OCI-LY7 (cell line): ENCODE measurements at regions of chr10 and their contacts with region 1.

Region 1: DNA sequence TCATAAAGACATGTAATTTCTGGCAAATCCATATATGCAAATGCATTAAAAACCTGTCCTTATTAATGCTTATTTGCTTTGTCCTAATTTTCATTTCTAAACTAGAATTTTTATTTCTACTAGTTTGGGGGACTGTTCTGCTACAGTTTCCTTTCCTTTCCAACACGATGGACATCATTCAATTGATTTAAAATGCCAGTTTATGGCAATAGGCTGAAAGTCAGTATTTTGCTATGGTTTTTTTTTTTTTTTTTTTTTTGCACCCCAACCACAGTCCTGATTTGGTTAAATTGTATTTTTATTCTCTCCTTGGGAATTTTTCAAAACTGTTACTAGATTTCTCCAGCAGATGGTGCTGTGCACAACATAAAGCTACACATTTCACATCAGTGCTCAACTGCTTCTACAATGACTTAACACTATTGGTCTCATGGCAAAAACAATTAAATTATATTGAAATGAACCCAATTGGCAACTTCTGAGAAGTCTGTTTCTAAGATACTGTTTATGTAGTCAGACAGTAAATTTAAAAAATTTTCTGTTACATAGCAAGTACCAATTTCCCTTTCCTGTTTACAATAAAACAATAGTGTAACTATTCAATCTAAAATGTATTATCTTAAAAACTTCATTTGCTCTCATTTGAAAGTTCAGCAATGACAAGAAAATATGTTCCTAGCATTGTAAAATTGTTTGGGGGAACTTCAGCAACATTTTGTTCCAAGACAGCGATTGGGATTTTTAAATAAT is 193.8 kb upstream of the CCDC6 start:
- DNase-seq: peak; percentile 58
- H3K4me3 ChIP-seq: no peak overlapping the region
- H3K27ac ChIP-seq: no peak overlapping the region
- H3K4me1 ChIP-seq: no peaks in the 10 kb centered on the region
- CTCF ChIP-seq: peak; percentile 85

Region 2: GRCh38 chr10:59865101-59865500 is 235.1 kb before region 1 on chr10:
- CTCF ChIA-PET with region 1: no interaction called
- POLR2A ChIA-PET with region 1: no interaction called
- intact Hi-C with region 1: loop called (anchors 10 kb)
- DNase-seq: peak; percentile 35
- H3K4me3 ChIP-seq: no peak overlapping the region
- H3K27ac ChIP-seq: no peak overlapping the region
- H3K4me1 ChIP-seq: peaks cover 5% of the 10 kb centered on the region
- CTCF ChIP-seq: peak; percentile 75

Region 3: DNA sequence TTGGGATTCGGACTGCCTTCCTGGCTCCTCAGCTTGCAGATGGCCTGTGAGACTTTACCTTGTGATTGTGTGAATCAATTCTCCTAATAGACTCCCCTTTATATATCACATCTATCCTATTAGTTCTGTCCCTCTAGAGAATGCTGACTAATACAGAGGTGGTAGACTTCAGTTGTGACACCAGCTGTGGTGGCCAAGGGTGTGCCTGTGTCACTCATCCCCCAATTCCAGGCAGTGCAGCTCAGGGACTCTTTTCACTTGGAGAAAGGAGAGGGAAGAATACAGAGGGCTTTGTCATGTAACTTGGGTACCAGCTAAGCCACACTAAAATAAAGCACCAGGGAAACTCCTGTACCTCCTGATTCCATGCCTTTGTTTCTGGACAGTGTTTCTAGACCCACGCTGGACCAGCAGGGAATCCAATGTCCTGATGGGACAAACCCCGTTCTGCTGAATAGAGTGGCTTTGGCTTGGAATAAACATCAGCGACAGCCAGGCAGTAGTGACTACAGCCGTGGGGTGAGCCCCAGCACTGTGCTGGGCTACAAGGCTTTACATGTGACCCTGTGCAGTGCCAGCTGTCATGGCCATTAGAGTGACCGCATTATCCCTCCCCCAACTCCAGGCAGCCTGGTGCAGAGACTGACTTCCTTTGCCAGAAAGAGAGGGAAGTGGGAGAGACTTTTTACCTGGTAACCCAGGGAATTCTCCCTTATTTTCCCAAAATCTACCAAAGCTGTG is 55.9 kb after region 1 on chr10:
- CTCF ChIA-PET with region 1: no interaction called
- POLR2A ChIA-PET with region 1: no interaction called
- intact Hi-C with region 1: no loop called
- DNase-seq: no peak
- H3K4me3 ChIP-seq: no peak overlapping the region
- H3K27ac ChIP-seq: no peak overlapping the region
- H3K4me1 ChIP-seq: no peaks in the 10 kb centered on the region
- CTCF ChIP-seq: no peak

Region 4: DNA sequence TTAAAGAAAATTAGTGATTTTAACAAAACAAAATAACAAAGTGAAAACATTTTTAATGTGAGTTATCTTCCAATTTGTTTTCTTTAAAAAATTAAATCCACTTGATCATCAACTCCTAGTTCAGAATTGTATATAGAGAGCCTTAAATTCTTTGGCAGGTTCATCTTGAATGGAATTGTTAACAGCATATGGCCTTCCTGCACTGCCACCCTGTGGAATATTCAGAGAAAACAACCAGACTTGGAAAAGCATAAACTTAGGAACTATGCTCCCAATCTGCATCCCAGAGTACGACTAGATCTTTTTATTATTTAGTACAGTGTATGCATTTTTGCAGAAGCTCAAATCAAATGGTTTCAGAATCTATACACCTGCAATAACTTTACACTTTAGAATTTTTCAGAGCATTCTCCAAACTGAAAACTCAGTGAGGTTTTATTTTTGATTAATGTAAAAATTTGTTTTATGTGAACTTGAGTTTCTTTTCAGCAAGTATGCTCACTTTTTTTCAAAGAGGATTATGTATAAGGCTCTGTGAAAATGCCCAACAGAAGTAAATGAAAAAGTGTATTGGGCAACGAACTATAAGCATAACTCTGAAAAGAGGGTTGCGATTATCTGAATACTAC is 334.4 kb after region 1 on chr10:
- CTCF ChIA-PET with region 1: no interaction called
- POLR2A ChIA-PET with region 1: interaction called, 3 read pairs
- intact Hi-C with region 1: loop called (anchors 1 kb)
- DNase-seq: peak; percentile 49
- H3K4me3 ChIP-seq: no peak overlapping the region
- H3K27ac ChIP-seq: no peak overlapping the region
- H3K4me1 ChIP-seq: no peaks in the 10 kb centered on the region
- CTCF ChIP-seq: peak; percentile 90

Region 5: GRCh38 chr10:60646966-60647796 is 547.0 kb after region 1 on chr10:
- CTCF ChIA-PET with region 1: no interaction called
- POLR2A ChIA-PET with region 1: no interaction called
- intact Hi-C with region 1: loop called (anchors 2 kb)
- DNase-seq: peak; percentile 63
- H3K4me3 ChIP-seq: no peak overlapping the region
- H3K27ac ChIP-seq: no peak overlapping the region
- H3K4me1 ChIP-seq: peaks cover under 1% of the 10 kb centered on the region
- CTCF ChIP-seq: peak; percentile 93

Region 6: GRCh38 chr10:60778214-60779029 is 678.2 kb after region 1 on chr10 and contains the start of gene CDK1:
- CTCF ChIA-PET with region 1: no interaction called
- POLR2A ChIA-PET with region 1: no interaction called
- intact Hi-C with region 1: loop called (anchors 10 kb)
- DNase-seq: peak; percentile 98
- H3K4me3 ChIP-seq: peak within 1 kb of the TSS; percentile 89
- H3K27ac ChIP-seq: peak within 1 kb of the TSS; percentile 84
- H3K4me1 ChIP-seq: peaks cover 35% of the 10 kb centered on the region
- CTCF ChIP-seq: no peak
- total RNA-seq, gene CDK1: 145 and 156 TPM in 2 replicates